HAP-1 (cell line): ENCODE measurements at regions of chr5 and their contacts with region 1.

Region 1: GRCh38 chr5:146049014-146049703 is 56.2 kb downstream of the PLAC8L1 start:
- DNase-seq: peak; percentile 70 to 76
- H3K4me3 ChIP-seq: no peak overlapping the region
- H3K4me1 ChIP-seq: no peaks in the 10 kb centered on the region
- H3K27me3 ChIP-seq: no peaks in the 10 kb centered on the region

Region 2: DNA sequence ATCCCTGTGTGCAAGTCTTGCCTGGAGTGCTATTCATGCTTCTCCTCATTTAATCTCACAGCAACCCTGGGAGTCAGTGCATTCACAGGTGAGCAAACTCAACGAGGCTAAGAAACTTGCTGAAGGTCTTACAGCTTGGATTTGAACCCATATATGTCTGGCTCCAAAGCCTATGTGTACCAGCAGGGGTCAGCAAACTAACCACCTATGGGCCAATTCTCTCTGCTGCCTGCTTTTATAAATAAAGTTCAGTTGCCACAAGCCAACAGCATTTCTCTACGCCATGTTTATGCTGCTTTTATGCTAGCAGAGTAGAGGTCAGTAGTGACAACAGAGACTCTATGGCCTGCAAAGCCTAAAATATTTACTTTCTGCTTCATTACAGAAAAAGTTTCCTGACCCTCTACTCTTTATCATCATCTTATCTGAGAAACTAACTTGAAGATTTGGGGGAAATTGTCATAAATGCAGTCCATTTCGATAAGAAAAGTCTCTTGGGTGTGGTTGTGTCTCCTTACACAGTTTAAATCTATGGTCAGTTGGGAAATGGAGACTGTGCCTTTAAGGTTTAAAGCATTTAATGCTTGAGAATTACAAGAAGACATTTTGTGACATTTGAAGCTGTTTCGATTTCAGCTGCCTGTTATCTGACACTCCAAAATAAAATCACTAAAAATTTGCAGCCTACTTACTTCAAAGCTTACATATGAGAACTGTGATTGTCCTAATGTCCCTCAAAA is 351.7 kb before region 1 on chr5:
- in situ Hi-C with region 1: loop called (anchors 10 kb)
- DNase-seq: peak in 1 of 2 experiments; percentile 52
- H3K4me3 ChIP-seq: no peak overlapping the region
- H3K4me1 ChIP-seq: no peaks in the 10 kb centered on the region
- H3K27me3 ChIP-seq: no peaks in the 10 kb centered on the region